ENCODE measurements at regions of chr2 and their contacts with region 1.

Region 1: GRCh38 chr2:104825124-104825865 is 28.6 kb upstream of the POU3F3 start:
- DNase-seq: peak; percentile 81
- H3K4me3 Mint-ChIP-seq: no peak overlapping the region
- H3K27ac Mint-ChIP-seq: no peak overlapping the region
- H3K4me1 Mint-ChIP-seq: peaks cover 31% of the 10 kb centered on the region
- H3K27me3 Mint-ChIP-seq: peaks cover 27% of the 10 kb centered on the region
- CTCF ChIP-seq: no peak

Region 2: DNA sequence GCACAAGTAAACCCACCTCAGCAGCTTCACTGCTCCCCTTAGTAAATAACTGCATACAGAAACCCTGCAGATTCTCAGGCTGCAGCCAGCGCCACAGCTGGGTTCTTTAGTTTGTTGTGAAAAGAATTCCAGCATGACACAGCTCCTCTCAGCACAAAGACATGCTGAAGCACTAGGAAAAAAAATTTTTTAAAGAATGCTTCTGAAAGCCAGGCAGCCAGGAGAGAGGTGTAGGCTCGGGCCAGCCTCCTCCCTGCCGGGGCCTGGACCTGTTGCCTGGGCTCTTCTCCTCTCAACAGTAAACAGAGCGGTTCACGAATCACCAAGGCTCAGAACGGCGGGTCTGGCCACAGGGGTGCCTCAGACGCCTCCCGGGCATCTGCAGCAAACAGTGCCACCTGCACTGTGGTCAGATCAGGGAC is 67.1 kb before region 1 on chr2:
- CTCF ChIA-PET with region 1: no interaction called
- POLR2A ChIA-PET with region 1: no interaction called
- intact Hi-C with region 1: loop called (anchors 10 kb)
- DNase-seq: no peak
- H3K4me3 Mint-ChIP-seq: no peak overlapping the region
- H3K27ac Mint-ChIP-seq: no peak overlapping the region
- H3K4me1 Mint-ChIP-seq: peaks cover 11% of the 10 kb centered on the region
- H3K27me3 Mint-ChIP-seq: no peaks in the 10 kb centered on the region
- CTCF ChIP-seq: no peak

Measured in MCF 10A (cell line).